ENCODE measurements at regions of chr12 and their contacts with region 1.

Region 1: DNA sequence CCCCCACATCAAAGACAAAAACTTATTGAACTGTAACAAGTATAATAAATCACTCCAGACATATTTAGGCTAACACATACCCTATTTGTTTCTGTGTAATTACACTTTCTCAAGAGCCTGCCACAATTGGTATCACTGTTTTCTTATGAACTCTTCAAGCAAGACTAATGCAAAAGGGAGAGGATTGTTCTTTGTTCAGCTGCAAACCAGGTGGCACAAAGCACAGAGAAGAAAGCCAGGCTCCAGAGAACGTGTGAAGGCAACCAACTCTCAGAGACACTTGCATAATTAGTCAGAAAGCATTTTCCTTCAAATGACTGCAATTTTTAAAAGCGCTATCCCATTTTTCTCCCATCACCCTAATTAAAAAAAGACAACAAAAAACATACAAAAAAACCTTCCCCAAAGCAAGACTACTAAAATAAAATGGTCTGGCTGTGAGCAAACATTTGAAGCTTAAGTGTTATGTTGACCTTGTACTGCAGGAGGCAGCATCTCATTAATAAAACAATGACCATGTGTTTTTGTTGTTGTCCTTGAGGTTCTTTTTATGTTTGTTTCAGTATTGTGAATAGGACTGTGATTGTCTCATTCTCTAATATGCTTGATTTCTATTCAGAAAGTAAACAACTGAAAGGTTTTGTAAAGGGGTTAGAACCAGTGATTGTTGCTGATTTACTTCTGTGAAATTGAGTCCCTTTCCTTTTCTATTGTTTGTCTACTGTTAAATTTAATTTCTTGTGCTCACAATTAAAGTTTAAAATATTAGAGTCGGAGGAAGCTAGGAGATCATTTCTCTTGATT is 452.7 kb upstream of the PDE3A start:
- DNase-seq: peak; percentile 31
- H3K4me3 ChIP-seq: no peak overlapping the region
- H3K27ac ChIP-seq: no peak overlapping the region
- H3K4me1 ChIP-seq: no peaks in the 10 kb centered on the region
- H3K27me3 ChIP-seq: no peaks in the 10 kb centered on the region
- CTCF ChIP-seq: peak; percentile 64

Region 2: DNA sequence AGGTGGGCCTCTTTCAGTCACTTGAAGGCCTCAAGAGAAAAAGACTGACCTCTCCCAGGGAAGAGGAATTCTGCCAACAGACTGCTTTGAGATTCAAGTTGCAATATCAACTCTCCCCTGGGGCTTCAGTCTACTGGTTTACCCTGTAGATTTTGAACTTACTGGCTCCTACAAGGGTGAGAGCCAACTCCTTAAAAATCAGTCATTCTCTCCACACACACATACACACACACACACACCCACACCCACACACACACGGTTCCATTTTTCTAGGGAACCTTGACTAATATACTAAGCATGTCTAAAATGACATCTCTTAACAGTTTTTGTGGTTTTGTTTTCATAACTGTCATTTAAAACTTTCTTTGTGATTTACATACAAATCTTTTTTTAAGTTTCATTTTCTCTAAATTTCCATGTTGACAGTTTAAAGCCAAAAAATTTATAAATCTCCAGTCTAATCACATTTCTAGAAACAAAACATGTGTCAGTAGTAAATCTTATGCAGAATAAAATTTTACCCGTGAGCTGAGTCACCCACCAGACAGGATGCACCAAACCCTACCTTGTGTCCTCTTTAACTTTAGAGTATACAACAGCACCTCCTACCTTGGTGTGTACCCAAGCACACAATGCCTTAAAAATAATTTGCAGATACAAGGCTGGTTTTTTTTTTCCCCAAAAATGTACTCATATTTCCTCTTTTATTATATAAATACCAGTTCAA is 81.7 kb before region 1 on chr12:
- CTCF ChIA-PET with region 1: no interaction called
- POLR2A ChIA-PET with region 1: no interaction called
- intact Hi-C with region 1: no loop called
- DNase-seq: peak; percentile 19
- H3K4me3 ChIP-seq: no peak overlapping the region
- H3K27ac ChIP-seq: no peak overlapping the region
- H3K4me1 ChIP-seq: no peaks in the 10 kb centered on the region
- H3K27me3 ChIP-seq: no peaks in the 10 kb centered on the region
- CTCF ChIP-seq: no peak

Region 3: DNA sequence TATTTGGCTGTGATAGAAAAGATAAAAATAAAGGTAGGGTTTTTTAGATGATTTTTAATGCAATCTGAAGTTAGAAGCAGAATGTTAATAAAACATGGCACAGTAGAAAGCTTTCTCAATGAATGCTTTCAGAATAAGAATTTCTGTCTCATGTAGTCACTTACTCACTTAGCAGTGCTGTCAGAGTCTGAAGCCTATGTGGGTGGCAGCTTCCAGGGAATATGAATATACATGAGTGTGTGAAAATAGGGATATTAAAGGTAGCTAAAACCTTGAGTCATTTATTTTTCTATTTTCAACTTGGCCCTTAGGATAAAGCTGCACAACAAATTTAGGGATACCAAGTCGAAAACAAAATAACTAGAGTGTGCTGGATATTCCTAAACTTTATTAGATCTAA is 48.4 kb before region 1 on chr12:
- CTCF ChIA-PET with region 1: interaction called, 12 read pairs
- POLR2A ChIA-PET with region 1: no interaction called
- intact Hi-C with region 1: no loop called
- DNase-seq: no peak
- H3K4me3 ChIP-seq: no peak overlapping the region
- H3K27ac ChIP-seq: no peak overlapping the region
- H3K4me1 ChIP-seq: no peaks in the 10 kb centered on the region
- H3K27me3 ChIP-seq: no peaks in the 10 kb centered on the region
- CTCF ChIP-seq: no peak

Measured in A673 (cell line).